ENCODE measurements at regions of chr10 and their contacts with region 1.

Region 1: DNA sequence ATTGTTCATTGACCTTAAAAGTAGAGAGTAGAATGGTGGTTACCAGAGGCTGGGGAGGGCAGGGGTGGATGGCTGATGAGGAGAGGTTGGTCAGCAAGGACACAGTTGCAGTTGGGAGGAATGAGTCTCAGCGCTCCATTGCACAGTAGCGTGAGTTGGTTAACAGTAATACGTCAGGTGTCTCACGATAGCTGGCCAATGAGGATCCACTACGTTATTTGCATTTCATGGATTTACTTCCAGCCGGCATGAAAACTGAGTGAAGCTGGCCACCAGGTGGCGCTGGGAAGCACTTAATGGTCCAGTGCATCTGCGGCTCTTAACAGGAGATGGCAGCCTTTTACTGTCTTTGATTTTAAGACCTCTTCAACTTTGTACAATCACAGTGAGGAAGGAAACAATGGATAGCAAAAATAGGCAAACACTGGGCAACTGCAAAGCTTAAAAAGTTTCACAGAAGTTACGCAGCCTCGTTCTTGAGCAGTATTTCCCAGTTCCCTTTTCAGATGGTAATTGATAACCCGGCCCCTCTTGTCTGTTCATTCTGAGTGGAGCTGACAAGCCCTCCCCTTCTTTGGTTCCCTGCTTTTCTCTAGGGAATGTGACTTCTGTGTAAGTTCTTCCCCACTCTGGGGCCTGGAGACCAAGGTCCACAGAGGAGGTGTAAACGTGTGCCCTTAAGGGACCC is 23.7 kb downstream of the AKR1E2 start:
- DNase-seq: peak; percentile 91
- H3K4me3 ChIP-seq: no peak overlapping the region
- H3K27ac ChIP-seq: no peak overlapping the region
- H3K4me1 ChIP-seq: peaks cover 9% of the 10 kb centered on the region
- H3K27me3 ChIP-seq: no peaks in the 10 kb centered on the region
- CTCF ChIP-seq: peak; percentile 100

Region 2: DNA sequence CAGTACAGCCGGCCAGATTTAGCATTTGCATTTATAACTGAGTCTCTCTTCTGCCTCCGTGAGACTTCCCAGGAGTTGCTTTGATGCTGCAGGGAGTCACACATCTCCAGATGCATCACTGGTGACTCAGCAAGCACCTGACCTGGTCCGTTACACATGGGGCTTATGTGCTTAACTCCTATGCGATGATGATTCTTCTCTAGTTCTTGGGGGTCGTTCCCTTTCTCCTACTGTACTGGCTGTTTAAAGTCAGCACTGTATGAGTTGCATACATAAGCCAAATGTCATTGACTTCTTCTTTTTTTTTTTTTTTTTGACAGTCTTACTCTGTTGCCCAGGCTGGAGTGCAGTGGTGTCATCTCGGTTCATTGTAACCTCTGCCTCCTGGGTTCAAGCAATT is 36.7 kb before region 1 on chr10:
- CTCF ChIA-PET with region 1: no interaction called
- dilution Hi-C with region 1: no loop called
- in situ Hi-C with region 1: no loop called
- intact Hi-C with region 1: loop called (anchors 2 kb)
- DNase-seq: peak; percentile 89
- H3K4me3 ChIP-seq: no peak overlapping the region
- H3K27ac ChIP-seq: peak overlapping the region; percentile 38
- H3K4me1 ChIP-seq: peaks cover 27% of the 10 kb centered on the region
- H3K27me3 ChIP-seq: no peaks in the 10 kb centered on the region
- CTCF ChIP-seq: no peak

Region 3: DNA sequence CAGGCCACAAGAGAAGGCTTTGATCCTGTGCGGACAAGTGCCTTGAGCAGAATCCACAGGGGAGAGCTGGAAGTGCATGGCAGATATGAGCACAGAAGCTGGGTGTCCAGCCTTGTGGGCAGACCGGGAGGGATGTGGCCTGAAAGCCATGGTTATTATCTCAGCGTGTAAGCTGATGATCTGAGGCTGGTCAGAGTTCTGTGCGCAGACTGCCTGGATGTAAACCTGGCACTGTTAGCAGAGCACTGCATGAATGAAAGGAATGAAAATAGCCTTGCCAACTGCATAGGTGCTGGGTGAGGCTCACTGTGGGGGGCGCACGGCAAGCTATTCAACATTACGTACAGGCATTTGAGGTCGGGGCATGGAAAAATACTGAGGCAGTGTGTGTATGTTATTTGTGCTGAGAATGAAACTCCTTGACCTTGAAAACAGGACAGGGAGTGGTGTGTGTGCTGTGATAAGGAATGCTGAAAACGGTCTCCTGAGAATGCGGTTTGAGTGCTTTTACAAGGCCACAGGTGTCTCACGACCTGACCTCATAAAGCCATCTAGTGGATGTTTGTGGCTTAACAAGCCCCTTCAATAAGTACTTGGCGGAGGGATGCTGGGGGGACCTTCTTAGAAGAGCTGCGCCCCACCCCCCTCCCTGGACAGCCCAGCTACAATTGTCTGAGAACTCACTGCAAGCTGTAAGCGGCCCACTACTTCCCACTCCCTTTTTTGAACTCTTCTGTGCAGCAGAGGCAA is 132.2 kb after region 1 on chr10:
- CTCF ChIA-PET with region 1: no interaction called
- dilution Hi-C with region 1: no loop called
- in situ Hi-C with region 1: no loop called
- intact Hi-C with region 1: loop called (anchors 1 kb)
- DNase-seq: peak; percentile 16
- H3K4me3 ChIP-seq: no peak overlapping the region
- H3K27ac ChIP-seq: no peak overlapping the region
- H3K4me1 ChIP-seq: no peaks in the 10 kb centered on the region
- H3K27me3 ChIP-seq: no peaks in the 10 kb centered on the region
- CTCF ChIP-seq: peak; percentile 49

Region 4: GRCh38 chr10:5283305-5284158 is 433.8 kb after region 1 on chr10:
- CTCF ChIA-PET with region 1: no interaction called
- dilution Hi-C with region 1: no loop called
- in situ Hi-C with region 1: loop called (anchors 5 to 10 kb)
- intact Hi-C with region 1: loop called (anchors 1 kb)
- DNase-seq: peak; percentile 64
- H3K4me3 ChIP-seq: no peak overlapping the region
- H3K27ac ChIP-seq: no peak overlapping the region
- H3K4me1 ChIP-seq: peaks cover 9% of the 10 kb centered on the region
- H3K27me3 ChIP-seq: no peaks in the 10 kb centered on the region
- CTCF ChIP-seq: peak; percentile 71 to 85

Region 5: DNA sequence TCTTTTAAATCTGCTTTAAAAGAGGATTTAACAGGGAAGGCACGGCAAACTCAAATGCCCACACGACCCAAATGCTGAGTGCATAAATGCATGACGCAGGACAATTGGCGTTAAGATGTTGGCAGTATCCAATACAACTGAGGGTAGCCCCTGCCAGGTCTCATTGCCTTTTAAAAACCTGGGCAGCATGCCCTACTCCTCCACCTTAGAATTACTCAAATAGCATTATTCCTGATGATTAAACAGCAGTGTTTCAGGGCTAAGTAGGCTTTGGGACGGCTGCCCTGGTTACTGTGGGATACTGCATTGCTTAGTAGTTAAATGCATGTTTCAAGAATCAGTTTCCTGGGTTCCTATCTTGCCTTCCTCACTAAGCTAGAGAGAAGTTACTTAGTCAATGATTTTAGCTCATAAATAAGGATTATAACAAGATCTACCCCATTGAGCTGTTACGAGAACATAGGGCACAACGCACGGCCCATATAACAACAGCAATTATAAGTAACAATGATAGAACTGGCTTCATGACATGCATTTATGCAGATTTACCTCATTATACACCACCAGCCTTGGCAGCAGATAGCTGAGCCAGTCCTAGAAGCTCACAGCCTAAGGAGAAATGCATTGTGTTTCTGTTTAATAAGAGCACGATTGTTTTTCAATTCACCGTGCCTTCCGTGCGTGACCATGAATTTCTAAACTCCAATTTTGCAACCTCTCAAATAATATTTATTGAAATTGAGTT is 547.0 kb after region 1 on chr10:
- CTCF ChIA-PET with region 1: no interaction called
- dilution Hi-C with region 1: no loop called
- in situ Hi-C with region 1: loop called in 1 of 2 experiments (anchors 25 kb)
- intact Hi-C with region 1: no loop called
- DNase-seq: no peak
- H3K4me3 ChIP-seq: no peak overlapping the region
- H3K27ac ChIP-seq: no peak overlapping the region
- H3K4me1 ChIP-seq: no peaks in the 10 kb centered on the region
- H3K27me3 ChIP-seq: no peaks in the 10 kb centered on the region
- CTCF ChIP-seq: no peak